ENCODE measurements at regions of chr4 and their contacts with region 1.

Region 1: GRCh38 chr4:146916479-146917076 is 29.1 kb downstream of the TTC29 start:
- DNase-seq: peak; percentile 47
- ATAC-seq: peak; percentile 60
- H3K4me3 ChIP-seq: no peak overlapping the region
- H3K27ac ChIP-seq: no peak overlapping the region
- H3K4me1 ChIP-seq: no peaks in the 10 kb centered on the region
- H3K27me3 ChIP-seq: peaks cover 4% of the 10 kb centered on the region
- CTCF ChIP-seq: peak; percentile 82
- POLR2A ChIP-seq: no peak
- RAD21 ChIP-seq: peak; percentile 83

Region 2: DNA sequence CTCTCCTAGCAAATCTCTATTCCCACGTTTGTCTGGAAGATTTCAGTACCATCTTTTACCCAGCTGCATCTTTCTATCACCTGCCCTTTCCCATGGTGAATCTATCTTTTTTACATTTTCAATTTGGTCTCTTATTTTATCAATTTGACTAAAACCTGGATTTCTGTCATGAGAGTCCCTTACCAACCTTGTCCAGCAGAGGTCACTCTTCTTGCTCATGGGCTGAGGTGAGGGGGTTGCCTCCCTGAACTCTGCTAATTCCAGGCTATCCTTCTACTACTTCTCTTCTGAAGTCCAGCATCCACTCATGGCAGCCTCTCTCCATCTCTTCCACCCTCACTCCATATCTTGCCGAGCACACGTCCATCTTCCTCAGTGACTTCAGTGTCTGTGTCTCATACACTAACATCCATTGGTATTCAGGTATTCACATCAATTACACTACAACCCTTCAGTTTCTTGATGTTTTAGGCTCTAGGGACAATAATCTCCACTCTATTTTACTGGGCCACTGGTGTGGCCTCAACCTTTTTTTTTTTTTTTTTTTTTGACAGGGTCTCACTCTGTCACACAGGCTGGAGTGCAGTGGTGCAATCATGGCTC is 960.2 kb before region 1 on chr4:
- CTCF ChIA-PET with region 1: no interaction called
- POLR2A ChIA-PET with region 1: no interaction called
- dilution Hi-C with region 1: no loop called
- in situ Hi-C with region 1: loop called (anchors 25 kb)
- intact Hi-C with region 1: loop called (anchors 5 kb)
- DNase-seq: peak; percentile 40
- ATAC-seq: peak; percentile 42; the same call in 1 of the 2 replicates
- H3K4me3 ChIP-seq: no peak overlapping the region
- H3K27ac ChIP-seq: no peak overlapping the region
- H3K4me1 ChIP-seq: no peaks in the 10 kb centered on the region; the same call in 1 of the 2 replicates
- H3K27me3 ChIP-seq: no peaks in the 10 kb centered on the region; the same call in 1 of the 2 replicates
- CTCF ChIP-seq: peak; percentile 61
- POLR2A ChIP-seq: no peak
- RAD21 ChIP-seq: peak; percentile 49

Region 3: DNA sequence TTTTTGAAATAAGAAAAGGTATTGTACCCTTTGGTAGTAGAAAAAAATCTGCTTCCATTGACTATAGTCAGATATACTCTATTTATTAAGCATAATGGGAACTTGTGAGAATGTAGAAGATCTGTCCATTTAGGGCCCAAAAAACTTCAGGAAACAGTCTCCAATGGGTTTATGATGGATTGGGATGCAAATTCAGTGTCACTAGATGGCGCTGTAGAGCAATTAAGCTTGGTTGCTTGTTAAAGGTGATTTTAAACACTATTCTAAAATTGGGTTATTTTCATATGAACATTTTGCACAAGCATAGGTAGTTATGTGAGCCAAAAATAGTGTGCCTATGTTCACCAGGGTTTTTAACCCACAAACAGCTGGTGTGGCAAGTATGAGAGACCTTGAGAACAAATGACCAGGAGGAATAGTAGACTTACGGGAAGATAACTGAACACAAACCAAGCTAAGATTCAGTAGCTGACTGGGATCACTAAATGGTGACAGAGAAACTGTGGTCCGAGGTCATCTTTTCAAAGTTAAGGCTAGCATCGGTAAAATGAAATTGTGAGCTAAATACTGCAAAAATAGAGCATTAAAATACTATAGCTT is 821.4 kb before region 1 on chr4:
- CTCF ChIA-PET with region 1: no interaction called
- POLR2A ChIA-PET with region 1: no interaction called
- dilution Hi-C with region 1: no loop called
- in situ Hi-C with region 1: no loop called
- intact Hi-C with region 1: loop called (anchors 1 kb)
- DNase-seq: peak; percentile 65
- ATAC-seq: no peak
- H3K4me3 ChIP-seq: no peak overlapping the region
- H3K27ac ChIP-seq: no peak overlapping the region
- H3K4me1 ChIP-seq: no peaks in the 10 kb centered on the region
- H3K27me3 ChIP-seq: peaks cover 6% of the 10 kb centered on the region
- CTCF ChIP-seq: peak; percentile 66
- POLR2A ChIP-seq: no peak
- RAD21 ChIP-seq: peak; percentile 56

Region 4: DNA sequence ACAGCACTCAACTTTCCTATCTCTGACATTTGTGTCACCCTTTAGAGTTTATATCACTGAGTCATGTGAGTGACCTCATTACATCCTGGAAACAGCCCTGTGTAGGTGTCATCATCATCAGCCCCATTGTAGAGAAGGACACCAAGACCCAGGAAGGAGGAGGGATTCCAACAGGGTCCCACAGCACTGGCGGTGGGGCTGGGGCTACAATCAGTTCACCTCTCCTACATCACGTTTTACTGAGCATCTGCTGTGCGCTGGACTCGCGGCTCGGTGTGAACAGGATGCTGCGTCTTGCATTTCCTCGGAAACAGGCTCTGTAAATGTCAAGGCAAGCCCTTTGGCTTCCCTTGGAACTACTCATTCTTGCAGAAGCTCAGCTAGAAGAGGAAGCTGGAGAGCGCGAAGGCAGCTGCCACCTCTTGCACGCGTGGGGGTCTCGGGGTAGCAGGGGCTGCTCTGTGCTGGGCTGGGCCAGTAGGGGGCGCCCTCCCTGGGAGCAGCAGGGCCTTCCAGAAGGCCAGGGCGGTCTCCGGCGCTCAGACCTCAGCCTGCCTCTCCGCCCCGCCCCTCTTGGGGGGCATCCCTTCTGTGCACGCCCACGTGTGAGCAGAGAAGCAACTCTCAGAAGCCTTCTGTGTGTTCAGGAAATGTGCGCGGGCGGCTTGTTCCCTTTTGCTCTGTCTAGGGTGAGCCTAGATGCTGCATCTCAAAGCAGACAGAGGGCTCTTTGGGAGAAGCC is 673.3 kb before region 1 on chr4:
- CTCF ChIA-PET with region 1: no interaction called
- POLR2A ChIA-PET with region 1: no interaction called
- dilution Hi-C with region 1: no loop called
- in situ Hi-C with region 1: no loop called
- intact Hi-C with region 1: loop called (anchors 1 kb)
- DNase-seq: peak; percentile 37
- ATAC-seq: no peak
- H3K4me3 ChIP-seq: no peak overlapping the region
- H3K27ac ChIP-seq: no peak overlapping the region
- H3K4me1 ChIP-seq: peaks cover 11% of the 10 kb centered on the region
- H3K27me3 ChIP-seq: no peaks in the 10 kb centered on the region
- CTCF ChIP-seq: 0 out of 2 replicates have a peak, but pooled peaks have one; percentile 4
- POLR2A ChIP-seq: no peak
- RAD21 ChIP-seq: no peak